Vagina (tissue), 2 donors: ENCODE measurements at regions of chr12 and their contacts with region 1.

Region 1: DNA sequence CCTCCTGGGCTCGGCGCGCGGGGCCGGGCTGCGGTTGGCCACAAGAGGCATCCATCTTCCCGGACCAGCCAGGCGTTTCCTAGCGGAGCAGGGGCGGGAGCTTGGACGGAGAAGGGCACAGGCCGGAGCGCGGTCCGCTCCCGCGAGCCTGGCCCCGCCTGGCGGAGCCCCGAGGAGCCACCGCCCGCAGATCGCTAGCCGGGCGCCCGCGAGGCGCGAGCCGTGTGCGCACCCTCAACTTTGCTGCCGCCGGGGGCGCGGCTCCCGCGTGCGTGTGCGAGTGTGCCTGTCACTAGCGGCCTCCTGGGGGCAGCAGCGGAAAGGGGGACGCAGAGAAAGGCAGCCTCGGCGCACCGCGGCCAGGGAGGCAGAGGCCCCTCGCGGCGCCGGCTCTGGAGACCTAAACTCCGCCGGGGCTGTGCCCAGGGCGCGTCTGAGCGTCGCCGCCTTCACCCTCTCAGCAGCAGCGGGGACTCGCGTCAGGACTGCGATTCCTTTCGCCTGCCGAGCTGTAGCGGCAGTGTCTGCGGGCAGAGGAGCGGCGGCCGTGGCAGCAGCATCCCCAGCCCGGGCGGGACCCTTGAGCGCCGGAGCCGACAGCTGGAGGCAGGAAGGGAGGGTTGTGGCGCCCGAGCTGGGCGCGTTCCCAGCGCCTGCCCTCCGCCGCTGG is 644 bp upstream of the SRGAP1 start:
- DNase-seq: peak in 1 of 2 donors; percentile 91
- H3K4me3 ChIP-seq: peak overlapping the region; percentile 71 to 74
- H3K27ac ChIP-seq: peak overlapping the region; percentile 94
- H3K4me1 ChIP-seq: peaks cover 13% of the 10 kb centered on the region
- H3K27me3 ChIP-seq: no peaks in the 10 kb centered on the region
- CTCF ChIP-seq: peak; percentile 75 to 93 (median 93)
- POLR2A ChIP-seq: peak in 1 of 2 donors; percentile 40

Region 2: GRCh38 chr12:64181504-64182291 is 337.8 kb after region 1 on chr12:
- intact Hi-C with region 1: loop called (anchors 2 kb)
- DNase-seq: peak in 1 of 2 donors; percentile 90
- H3K4me3 ChIP-seq: no peak overlapping the region
- H3K27ac ChIP-seq: peak overlapping the region; percentile 53
- H3K4me1 ChIP-seq: peaks cover 10% of the 10 kb centered on the region
- H3K27me3 ChIP-seq: no peaks in the 10 kb centered on the region
- CTCF ChIP-seq: peak in 2 of 3 experiments; percentile 33 to 60
- POLR2A ChIP-seq: no peak

Region 3: DNA sequence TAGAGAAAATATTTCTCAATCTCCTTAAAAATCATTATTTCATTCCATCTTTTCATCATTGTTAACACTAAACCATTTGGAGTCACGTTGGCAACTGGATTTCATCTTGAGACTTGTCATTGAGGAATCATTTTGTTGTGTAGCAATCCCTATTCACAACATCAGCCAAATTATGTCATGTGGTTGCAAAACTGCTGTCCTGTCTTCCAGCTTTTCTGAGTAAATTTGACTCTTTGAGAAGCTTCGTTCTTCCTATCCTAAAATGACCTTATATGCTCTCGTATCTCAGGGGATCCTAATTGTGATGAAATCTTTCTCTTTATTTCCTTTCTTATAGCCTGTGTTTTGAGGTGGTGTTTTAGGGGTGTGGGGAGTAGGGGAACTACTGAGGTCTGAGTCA is 408.8 kb after region 1 on chr12:
- intact Hi-C with region 1: loop called (anchors 2 kb)
- DNase-seq: no peak
- H3K4me3 ChIP-seq: no peak overlapping the region
- H3K27ac ChIP-seq: peak overlapping the region; percentile 22
- H3K4me1 ChIP-seq: no peaks in the 10 kb centered on the region
- H3K27me3 ChIP-seq: no peaks in the 10 kb centered on the region
- CTCF ChIP-seq: no peak
- POLR2A ChIP-seq: no peak